A673 (cell line): ENCODE measurements at regions of chr2 and their contacts with region 1.

Region 1: DNA sequence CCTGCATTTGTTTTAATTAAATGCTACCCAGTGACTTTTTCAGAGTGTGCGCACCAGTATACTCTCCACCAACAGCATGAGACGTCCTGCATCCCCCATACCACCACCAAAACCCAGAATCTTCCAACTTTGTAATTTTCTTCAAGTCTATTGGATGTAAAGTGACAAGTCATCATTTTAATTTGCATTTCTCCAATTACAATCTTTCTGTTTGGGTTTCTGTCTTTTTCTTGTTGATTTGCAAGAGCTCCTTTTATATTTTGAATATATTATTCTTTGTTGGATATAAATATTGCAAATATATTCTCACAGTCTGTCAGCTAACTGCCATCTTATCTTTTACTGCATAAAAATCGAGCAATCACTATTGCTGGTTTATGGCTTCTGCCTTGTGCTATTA is 96.6 kb downstream of the FAM168B start:
- DNase-seq: no peak
- H3K4me3 ChIP-seq: no peak overlapping the region
- H3K27ac ChIP-seq: no peak overlapping the region
- H3K4me1 ChIP-seq: no peaks in the 10 kb centered on the region
- H3K27me3 ChIP-seq: peaks cover 46% of the 10 kb centered on the region
- CTCF ChIP-seq: no peak

Region 2: GRCh38 chr2:130720036-130720435 is 276.7 kb before region 1 on chr2:
- CTCF ChIA-PET with region 1: no interaction called
- POLR2A ChIA-PET with region 1: no interaction called
- intact Hi-C with region 1: no loop called
- DNase-seq: no peak
- H3K4me3 ChIP-seq: no peak overlapping the region
- H3K27ac ChIP-seq: no peak overlapping the region
- H3K4me1 ChIP-seq: no peaks in the 10 kb centered on the region
- H3K27me3 ChIP-seq: no peaks in the 10 kb centered on the region
- CTCF ChIP-seq: no peak

Region 3: DNA sequence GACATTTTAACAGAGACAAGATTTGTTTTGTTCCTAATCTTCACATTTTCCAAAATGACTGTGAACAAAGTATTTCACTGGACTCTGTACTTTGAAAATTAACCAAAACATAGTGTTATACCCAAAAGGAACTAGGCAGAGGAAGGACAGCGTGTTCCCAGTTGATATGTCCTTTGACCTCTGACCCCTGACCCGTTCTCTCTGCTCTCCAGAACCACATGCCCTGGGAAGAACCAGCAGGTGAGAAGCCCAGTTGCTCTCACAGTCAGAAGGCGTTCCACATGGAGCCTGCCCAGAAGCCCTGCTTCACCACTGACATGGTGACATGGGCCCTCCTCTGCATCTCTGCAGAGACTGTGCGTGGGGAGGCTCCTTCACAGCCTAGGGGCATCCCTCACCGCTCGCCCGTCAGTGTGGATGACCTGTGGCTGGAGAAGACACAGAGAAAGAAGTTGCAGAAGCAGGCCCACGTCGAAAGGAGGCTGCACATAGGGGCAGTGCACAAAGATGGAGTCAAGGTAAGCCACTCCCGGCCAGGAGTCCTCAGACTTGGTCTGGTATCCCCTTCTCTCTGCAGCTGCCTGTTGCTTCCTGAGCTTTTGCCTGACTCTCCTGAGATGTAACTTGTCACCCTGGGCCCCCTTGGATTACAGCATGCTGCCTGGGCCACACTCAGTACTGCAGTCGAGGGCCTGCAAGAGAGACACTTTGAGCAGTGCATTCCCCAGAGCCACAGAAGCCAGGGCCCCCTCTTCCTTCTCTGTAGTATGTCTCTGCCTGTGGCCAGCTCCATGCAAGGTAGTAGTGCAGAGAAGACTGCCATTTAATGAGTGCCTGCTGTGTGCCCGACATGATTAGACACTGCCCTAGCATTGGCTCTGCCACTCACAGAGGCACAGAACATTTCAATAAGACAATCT is 65.7 kb before region 1 on chr2:
- CTCF ChIA-PET with region 1: no interaction called
- POLR2A ChIA-PET with region 1: no interaction called
- intact Hi-C with region 1: loop called (anchors 2 kb)
- DNase-seq: no peak
- H3K4me3 ChIP-seq: no peak overlapping the region
- H3K27ac ChIP-seq: no peak overlapping the region
- H3K4me1 ChIP-seq: no peaks in the 10 kb centered on the region
- H3K27me3 ChIP-seq: peaks cover 25% of the 10 kb centered on the region
- CTCF ChIP-seq: no peak

Region 4: DNA sequence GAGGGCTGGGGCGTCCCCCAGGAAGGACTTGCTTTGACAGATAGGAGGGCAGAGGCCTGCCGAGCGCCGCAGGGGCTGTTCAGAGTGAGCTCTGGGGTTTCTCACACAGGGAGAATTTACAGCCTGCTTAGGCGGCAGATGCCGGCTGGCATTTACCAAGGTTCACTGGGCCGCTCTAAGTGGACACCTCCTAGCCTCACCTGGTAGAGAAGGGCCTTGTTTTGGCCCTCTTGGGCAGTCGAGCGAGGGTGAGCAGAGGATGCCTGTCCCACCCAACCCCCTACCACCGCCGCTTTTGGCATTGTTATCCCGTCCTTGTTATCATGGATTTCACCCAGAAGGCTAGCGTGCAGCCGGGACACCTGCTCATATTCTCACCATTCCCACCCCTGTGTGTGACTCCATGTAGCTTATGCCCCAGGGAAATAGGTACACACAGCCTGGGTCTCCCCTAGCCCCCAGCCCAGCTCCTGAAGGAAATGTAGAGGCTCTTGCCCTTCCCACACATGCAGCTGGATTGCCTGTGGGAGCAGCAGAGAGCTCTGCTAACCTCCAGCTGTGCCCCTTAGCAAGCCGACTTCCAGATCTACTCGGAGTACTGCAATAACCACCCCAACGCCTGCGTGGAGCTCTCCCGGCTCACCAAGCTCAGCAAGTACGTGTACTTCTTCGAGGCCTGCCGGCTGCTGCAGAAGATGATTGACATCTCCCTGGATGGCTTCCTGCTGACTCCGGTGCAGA is 44.1 kb after region 1 on chr2:
- CTCF ChIA-PET with region 1: no interaction called
- POLR2A ChIA-PET with region 1: no interaction called
- intact Hi-C with region 1: no loop called
- DNase-seq: peak; percentile 10
- H3K4me3 ChIP-seq: no peak overlapping the region
- H3K27ac ChIP-seq: no peak overlapping the region
- H3K4me1 ChIP-seq: no peaks in the 10 kb centered on the region
- H3K27me3 ChIP-seq: no peaks in the 10 kb centered on the region
- CTCF ChIP-seq: 0 out of 2 replicates have a peak, but pooled peaks have one; percentile 19